SK-N-SH (cell line): ENCODE measurements at regions of chr7 and their contacts with region 1.

Region 1: GRCh38 chr7:75866489-75867389 is 12.1 kb upstream of the RHBDD2 start:
- DNase-seq: peak; percentile 86
- H3K4me3 ChIP-seq: no peak overlapping the region
- H3K27ac ChIP-seq: no peak overlapping the region
- H3K4me1 ChIP-seq: peaks cover 3 to 6% of the 10 kb centered on the region in 2 experiments; a peak in 1 of 4 replicates
- H3K27me3 ChIP-seq: no peaks in the 10 kb centered on the region
- CTCF ChIP-seq: peak; percentile 97
- EP300 ChIP-seq: no peak
- RAD21 ChIP-seq: peak; percentile 97

Region 2: DNA sequence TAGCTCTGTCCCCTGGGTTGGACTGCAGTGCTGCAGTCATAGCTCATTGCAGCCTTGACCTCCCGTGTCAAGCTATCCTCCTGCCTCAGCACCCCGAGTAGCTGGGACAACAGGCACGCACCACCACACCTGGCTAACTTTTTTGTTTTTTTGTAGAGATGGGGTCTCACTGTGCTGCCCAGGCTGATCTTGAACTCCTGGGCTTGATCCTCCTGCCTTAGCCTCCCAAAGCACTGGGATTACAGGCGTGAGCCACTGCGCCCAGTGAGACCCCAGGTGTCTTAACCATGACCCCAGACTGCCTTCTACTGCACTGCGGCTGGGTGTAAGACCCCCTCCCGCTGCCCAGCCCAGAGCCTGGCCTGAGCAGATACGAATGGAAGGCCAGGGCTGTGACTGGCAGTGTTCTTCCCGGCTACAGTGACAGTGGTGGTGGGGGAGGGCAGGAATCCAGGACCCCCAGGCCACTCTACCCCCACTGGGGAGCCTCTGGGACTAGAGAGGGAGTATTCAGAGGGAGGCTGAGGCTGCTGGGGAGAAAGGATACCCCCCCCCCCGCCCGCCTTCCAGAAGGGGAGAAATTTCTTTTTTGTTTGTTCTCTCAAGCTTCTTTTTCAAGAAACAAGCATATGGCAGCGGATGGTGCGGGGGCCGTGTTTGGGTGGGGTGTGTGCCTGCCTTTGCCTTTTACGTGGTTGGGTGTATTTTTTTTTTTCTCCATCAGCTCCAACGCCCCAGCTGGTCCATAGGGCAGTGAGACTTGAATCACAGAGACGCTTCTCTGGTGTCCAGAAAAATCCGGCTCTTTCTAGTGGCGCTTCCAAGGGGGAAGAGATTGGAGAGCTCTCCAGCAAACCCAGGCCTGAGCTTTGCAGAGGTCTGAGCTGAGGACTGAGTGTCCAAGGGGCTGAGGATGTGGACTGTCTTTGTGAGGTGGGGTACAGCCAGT is 1376.5 kb before region 1 on chr7:
- CTCF ChIA-PET with region 1: no interaction called
- POLR2A ChIA-PET with region 1: no interaction called
- DNase-seq: peak; percentile 41
- H3K4me3 ChIP-seq: no peak overlapping the region
- H3K27ac ChIP-seq: no peak overlapping the region
- H3K4me1 ChIP-seq: no peaks in the 10 kb centered on the region; a peak in 1 of 4 replicates
- H3K27me3 ChIP-seq: no peaks in the 10 kb centered on the region
- CTCF ChIP-seq: no peak
- EP300 ChIP-seq: no peak
- RAD21 ChIP-seq: no peak

Region 3: DNA sequence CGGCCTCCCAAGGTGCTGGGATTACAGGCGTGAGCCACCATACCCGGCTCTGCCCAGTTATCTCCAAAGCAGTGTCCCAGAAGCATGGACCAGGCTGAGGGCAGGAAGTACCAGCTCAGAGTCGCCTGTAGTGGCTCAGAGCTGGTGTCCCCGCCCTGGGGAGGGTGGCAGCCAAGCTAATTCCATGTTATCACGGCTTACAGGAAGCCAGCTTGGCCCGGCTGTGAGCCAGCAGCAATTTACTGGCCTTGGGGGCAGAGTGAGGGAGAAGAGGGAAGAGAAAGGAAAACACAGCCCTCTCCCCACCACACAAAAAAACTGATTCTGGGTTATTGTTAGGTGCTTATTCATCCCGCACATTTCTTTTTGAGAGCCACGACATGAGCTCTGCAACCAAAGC is 216.1 kb before region 1 on chr7:
- CTCF ChIA-PET with region 1: no interaction called
- POLR2A ChIA-PET with region 1: no interaction called
- DNase-seq: peak; percentile 57
- H3K4me3 ChIP-seq: no peak overlapping the region
- H3K27ac ChIP-seq: no peak overlapping the region
- H3K4me1 ChIP-seq: no peaks in the 10 kb centered on the region; a peak in 1 of 4 replicates
- H3K27me3 ChIP-seq: no peaks in the 10 kb centered on the region
- CTCF ChIP-seq: no peak
- EP300 ChIP-seq: no peak
- RAD21 ChIP-seq: no peak

Region 4: GRCh38 chr7:75688200-75689136 is 178.3 kb before region 1 on chr7:
- CTCF ChIA-PET with region 1: no interaction called
- POLR2A ChIA-PET with region 1: no interaction called
- DNase-seq: peak; percentile 50
- H3K4me3 ChIP-seq: no peak overlapping the region
- H3K27ac ChIP-seq: no peak overlapping the region
- H3K4me1 ChIP-seq: no peaks in the 10 kb centered on the region; a peak in 1 of 4 replicates
- H3K27me3 ChIP-seq: no peaks in the 10 kb centered on the region
- CTCF ChIP-seq: no peak
- EP300 ChIP-seq: no peak
- RAD21 ChIP-seq: no peak

Region 5: DNA sequence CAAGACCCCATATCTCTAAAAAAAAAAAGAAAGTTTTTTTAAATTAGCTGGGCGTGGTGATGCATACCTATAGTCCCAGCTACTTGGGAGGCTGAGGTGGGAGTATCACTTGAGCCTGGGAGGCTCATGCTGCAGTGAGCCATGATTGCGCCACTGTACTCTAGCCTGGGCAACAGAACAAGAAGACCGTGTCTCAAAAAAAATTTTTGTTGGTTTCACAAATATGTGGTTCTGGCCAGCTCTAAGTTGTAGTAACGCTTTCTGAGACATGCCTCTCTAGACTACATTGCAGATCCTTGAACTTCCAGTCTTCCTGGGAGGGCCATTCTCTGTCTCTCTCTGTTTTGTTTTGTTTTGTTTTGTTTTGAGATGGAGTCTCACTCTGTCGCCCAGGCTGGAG is 12.5 kb before region 1 on chr7:
- CTCF ChIA-PET with region 1: interaction called, 19 read pairs
- POLR2A ChIA-PET with region 1: no interaction called
- DNase-seq: no peak
- H3K4me3 ChIP-seq: no peak overlapping the region
- H3K27ac ChIP-seq: no peak overlapping the region
- H3K4me1 ChIP-seq: no peaks in the 10 kb centered on the region
- H3K27me3 ChIP-seq: no peaks in the 10 kb centered on the region; the same call in 1 of the 2 replicates
- CTCF ChIP-seq: no peak
- EP300 ChIP-seq: no peak
- RAD21 ChIP-seq: no peak

Region 6: GRCh38 chr7:75885036-75885435 is 18.3 kb after region 1 on chr7:
- CTCF ChIA-PET with region 1: interaction called, 28 read pairs
- POLR2A ChIA-PET with region 1: interaction called, 3 read pairs
- DNase-seq: no peak
- H3K4me3 ChIP-seq: no peak overlapping the region
- H3K27ac ChIP-seq: no peak overlapping the region
- H3K4me1 ChIP-seq: peaks cover 0 to 4% of the 10 kb centered on the region in 2 experiments; a peak in 2 of 4 replicates
- H3K27me3 ChIP-seq: no peaks in the 10 kb centered on the region
- CTCF ChIP-seq: no peak
- EP300 ChIP-seq: no peak
- RAD21 ChIP-seq: no peak

Region 7: DNA sequence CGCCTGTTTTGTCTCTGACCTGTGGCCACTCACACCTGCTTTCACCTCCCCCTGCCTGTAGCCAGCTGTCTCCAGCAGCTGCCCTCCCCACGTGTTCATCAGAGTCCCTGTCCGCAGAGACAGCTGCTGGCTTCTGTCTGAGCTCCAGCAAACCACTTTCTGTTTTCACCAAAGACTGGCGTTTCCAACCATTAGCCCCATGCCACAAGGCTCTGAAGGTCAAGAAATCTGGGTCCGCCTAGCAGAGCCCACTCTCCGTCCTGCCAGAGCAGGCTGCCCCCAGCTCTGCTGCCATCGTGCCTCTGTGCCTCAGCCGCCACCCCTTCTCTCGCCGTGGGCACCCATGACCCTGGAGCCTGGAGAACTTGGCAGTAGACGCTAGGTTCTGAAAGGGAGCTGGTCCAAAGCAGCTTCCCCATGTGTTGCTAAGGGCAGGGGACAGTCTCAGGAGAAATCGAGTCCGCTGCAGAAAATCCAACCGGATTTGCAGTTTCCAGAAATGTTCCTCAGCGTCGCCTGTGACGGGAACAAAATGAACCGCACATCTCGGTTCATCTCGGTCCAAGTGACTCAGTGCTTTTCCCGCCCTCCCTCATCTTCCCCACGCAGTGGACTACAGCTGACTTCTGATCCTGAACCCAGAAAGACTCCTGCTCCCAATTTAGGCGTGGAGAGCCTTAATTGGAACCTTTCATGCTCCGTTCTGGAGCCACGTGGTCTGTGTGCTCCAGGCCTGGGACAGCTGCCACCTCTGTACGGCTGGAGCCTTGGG is 99.6 kb after region 1 on chr7:
- CTCF ChIA-PET with region 1: interaction called, 18 read pairs
- POLR2A ChIA-PET with region 1: no interaction called
- DNase-seq: peak; percentile 53
- H3K4me3 ChIP-seq: no peak overlapping the region
- H3K27ac ChIP-seq: peak overlapping the region in 1 of 2 experiments; percentile 25; a peak in 2 of 4 replicates
- H3K4me1 ChIP-seq: peaks cover 0 to 50% of the 10 kb centered on the region in 2 experiments; a peak in 1 of 4 replicates
- H3K27me3 ChIP-seq: no peaks in the 10 kb centered on the region
- CTCF ChIP-seq: no peak
- EP300 ChIP-seq: peak in 1 of 2 experiments; percentile 13; a peak in 1 of 4 replicates
- RAD21 ChIP-seq: no peak

Region 8: DNA sequence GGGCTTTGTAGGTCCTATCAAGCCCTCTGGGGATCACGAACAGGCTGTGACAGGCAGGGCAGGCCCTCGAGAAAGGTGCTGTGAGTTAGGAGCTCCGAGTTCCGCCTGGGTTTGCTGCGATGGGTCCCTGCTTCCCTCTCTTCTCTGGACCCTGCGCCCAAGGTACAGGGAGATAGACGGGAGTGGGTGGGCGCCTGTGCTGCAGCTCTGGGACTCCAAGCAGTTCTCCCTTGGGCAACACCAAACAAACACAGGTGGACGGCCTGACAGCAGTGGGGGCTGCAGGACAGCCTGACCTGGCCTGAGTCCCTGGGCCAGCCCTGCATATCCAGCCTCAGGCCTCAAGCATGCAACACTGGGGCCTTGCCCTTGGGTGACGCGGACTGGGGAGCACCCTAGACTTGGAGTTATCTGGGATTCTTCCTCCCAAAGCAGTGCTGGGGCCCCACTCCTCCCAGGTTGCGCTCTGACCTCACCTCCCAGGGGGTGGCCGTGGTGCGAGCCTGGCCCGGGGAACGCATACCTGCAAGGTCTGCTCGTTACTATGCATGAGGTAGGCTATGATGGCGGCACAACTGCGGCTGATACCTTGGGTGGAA is 133.7 kb after region 1 on chr7:
- CTCF ChIA-PET with region 1: interaction called, 24 read pairs
- POLR2A ChIA-PET with region 1: interaction called, 3 read pairs
- DNase-seq: no peak
- H3K4me3 ChIP-seq: no peak overlapping the region
- H3K27ac ChIP-seq: no peak overlapping the region
- H3K4me1 ChIP-seq: no peaks in the 10 kb centered on the region
- H3K27me3 ChIP-seq: no peaks in the 10 kb centered on the region
- CTCF ChIP-seq: no peak
- EP300 ChIP-seq: no peak
- RAD21 ChIP-seq: no peak

Region 9: DNA sequence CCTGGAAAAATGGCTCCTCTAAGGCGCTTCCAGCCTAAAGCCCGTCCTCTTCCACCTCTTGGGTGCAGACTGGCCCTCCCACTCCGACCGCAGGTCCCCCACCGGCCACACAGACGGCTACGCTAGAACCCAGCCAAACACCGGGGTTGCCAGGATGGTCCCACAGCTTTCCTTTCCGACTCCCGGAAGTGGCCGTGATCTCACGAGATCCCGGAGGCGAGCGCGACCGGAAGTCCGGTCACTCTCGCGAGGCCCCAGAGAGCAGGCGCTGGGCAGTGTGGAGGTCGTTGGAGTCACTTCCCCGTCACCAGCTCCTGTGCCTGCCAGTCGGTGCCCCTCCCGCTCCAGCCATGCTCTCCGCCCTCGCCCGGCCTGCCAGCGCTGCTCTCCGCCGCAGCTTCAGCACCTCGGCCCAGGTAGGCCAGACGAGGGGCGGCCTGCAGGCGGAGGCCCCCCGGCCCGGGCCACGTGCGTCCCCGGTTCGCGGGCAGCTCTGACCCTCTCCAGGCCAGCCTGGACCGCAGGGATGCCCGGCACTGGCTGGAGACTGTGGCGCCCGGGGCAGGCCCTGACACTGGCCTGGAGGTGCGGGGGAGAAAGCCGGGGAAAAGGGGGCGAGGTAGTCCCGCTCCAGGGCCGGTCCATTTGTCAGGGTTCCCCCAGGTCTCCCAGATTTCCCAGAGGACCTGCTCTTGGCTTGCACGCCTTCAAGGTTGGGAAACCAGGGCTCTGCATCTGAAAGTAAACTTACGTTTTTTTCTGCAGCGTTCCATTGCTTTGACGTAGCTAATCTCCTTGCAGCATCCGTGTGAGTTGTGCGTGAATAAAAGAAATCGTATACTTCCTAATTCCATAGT is 181.3 kb after region 1 on chr7 and contains the starts of genes MDH2 and STYXL1:
- CTCF ChIA-PET with region 1: interaction called, 10 read pairs
- POLR2A ChIA-PET with region 1: no interaction called
- DNase-seq: peak; percentile 99
- H3K4me3 ChIP-seq: peak within 1 kb of the TSS; percentile 73 to 97
- H3K27ac ChIP-seq: peak within 1 kb of the TSS; percentile 81 to 86
- H3K4me1 ChIP-seq: peaks cover 0 to 9% of the 10 kb centered on the region in 2 experiments; a peak in 2 of 4 replicates
- H3K27me3 ChIP-seq: no peaks in the 10 kb centered on the region
- CTCF ChIP-seq: no peak
- EP300 ChIP-seq: no peak
- RAD21 ChIP-seq: no peak
- polyA plus RNA-seq, gene MDH2: 244 and 301 TPM in 2 replicates
- polyA plus RNA-seq, gene STYXL1: 86.6 and 89.4 TPM in 2 replicates

Region 10: DNA sequence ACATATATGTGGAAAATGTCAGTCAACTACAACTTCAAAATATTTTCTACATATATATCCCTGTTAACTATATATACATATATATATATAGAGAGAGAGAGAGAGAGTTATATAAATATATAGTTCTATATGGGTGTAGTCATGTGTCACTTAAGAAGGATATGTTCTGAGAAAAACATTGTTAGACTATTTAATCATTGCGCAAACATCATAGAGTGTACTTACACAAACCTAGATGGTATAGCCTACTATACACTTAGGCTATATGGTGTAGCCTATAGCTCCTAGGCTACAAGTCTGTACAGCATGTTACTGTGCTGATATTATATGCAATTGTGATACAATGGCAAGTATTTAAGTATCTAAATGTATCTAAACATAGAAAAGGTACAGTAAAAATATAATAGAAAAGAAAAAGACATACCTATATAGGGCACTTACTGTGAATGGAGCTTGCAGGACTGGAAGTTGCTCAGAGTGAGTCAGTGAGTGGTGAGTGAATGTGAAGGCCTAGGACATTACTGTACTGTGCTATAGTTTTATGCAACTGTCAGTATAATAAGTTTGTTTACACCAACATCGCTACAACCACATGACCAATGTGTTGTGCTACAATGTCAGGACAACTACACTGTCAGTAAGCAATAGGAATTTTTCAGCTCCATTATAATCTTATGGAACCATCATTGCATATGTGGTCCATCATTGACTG is 1350.9 kb after region 1 on chr7:
- CTCF ChIA-PET with region 1: no interaction called
- POLR2A ChIA-PET with region 1: no interaction called
- DNase-seq: no peak
- H3K4me3 ChIP-seq: no peak overlapping the region
- H3K27ac ChIP-seq: no peak overlapping the region
- H3K4me1 ChIP-seq: no peaks in the 10 kb centered on the region
- H3K27me3 ChIP-seq: no peaks in the 10 kb centered on the region
- CTCF ChIP-seq: no peak
- EP300 ChIP-seq: no peak
- RAD21 ChIP-seq: no peak